Dorsolateral prefrontal cortex (tissue), 120 donors: ENCODE measurements at regions of chr6 and their contacts with region 1.

Region 1: DNA sequence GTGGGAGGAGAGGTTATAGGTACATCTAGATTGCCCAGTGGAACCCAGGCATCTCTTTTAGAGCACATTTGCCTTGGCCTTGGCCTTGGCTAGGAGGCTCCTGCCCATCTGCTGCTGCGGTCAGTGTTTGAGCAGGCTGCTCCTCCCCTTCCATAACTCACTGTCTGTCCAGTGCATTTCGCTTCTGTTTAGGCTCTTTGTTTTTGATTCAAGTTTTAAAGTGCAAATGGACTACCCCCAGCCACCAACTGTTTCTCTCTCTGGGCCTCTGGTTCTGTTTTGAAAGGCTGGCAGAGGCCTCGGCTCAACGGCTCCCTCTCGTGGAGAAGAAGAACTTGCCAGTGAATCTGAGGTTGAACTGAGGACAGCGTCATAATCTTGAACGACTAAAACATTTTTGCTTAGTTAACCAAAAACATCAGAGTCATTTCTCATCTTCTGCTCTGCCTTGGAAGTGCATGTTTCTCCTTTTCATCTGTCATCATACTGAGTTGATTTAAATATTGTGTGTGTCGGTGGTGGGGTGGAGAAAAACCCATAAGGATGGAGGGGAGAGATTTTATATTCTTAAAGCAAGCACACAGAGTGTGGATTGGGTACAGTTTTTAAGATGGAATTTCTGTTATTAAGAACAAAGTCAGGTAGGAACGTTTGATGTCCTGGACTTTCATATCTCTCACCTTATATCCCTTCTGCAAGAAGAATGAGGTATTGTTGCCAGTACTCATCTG is 171.4 kb downstream of the DTNBP1 start:
- DNase-seq: peak; percentile 70 to 89 (median 83)
- H3K4me3 ChIP-seq: peak overlapping the region in 3 of 59 donors; percentile 0 to 6 (median 3)
- H3K27ac ChIP-seq: peak overlapping the region in 17 of 59 donors; percentile 1 to 67 (median 32)
- H3K27me3 ChIP-seq: no peaks in the 10 kb centered on the region
- CTCF ChIP-seq: peak; percentile 74 to 99 (median 96)

Region 2: GRCh38 chr6:15389765-15390723 is 101.4 kb before region 1 on chr6:
- intact Hi-C with region 1: loop called in 1 of 2 experiments (anchors 5 kb)
- DNase-seq: peak in 1 of 10 donors; percentile 30
- H3K4me3 ChIP-seq: peak overlapping the region in 2 of 59 donors; percentile 3 to 15
- H3K27ac ChIP-seq: peak overlapping the region in 20 of 59 donors; percentile 0 to 67 (median 20)
- H3K27me3 ChIP-seq: no peaks in the 10 kb centered on the region
- CTCF ChIP-seq: peak in 54 of 56 donors; percentile 47 to 80 (median 66)

Region 3: GRCh38 chr6:15399641-15400470 is 91.6 kb before region 1 on chr6:
- intact Hi-C with region 1: loop called in 1 of 2 experiments (anchors 10 kb)
- DNase-seq: peak; percentile 66 to 88 (median 79)
- H3K4me3 ChIP-seq: peak overlapping the region; percentile 38 to 74 (median 59)
- H3K27ac ChIP-seq: peak overlapping the region; percentile 46 to 96 (median 89)
- H3K27me3 ChIP-seq: no peaks in the 10 kb centered on the region
- CTCF ChIP-seq: peak in 5 of 56 donors; percentile 8 to 16 (median 13)